ENCODE measurements at regions of chr7 and their contacts with region 1.

Region 1: GRCh38 chr7:116525913-116526861 is 1.4 kb downstream of the CAV1 start:
- DNase-seq: peak; percentile 14 to 89
- H3K4me3 ChIP-seq: peak overlapping the region; percentile 75 to 98
- H3K27ac ChIP-seq: peak overlapping the region; percentile 97 to 99
- H3K4me1 ChIP-seq: peaks cover 0 to 18% of the 10 kb centered on the region in 2 donors
- H3K27me3 ChIP-seq: no peaks in the 10 kb centered on the region
- CTCF ChIP-seq: peak; percentile 49 to 97 (median 62)

Region 2: DNA sequence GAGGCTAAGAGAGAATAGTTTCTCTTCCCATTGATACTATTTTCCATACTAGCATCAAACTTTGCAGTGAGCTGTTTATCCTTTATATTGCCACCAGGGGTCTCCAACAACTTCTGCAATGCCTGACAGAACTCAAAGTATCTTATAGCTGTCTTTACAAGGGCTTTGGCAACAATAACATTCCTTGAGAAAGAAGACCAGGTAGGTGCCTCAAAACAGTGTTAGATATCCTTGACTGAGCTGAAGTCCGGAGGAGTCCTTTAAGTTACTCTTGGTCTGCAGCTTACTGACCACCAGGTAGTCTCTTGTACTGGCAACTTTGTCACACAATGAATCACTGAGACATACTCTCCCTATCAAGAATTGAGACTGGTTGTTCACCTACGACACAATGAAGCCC is 345.9 kb before region 1 on chr7:
- intact Hi-C with region 1: loop called (anchors 5 kb)
- DNase-seq: no peak
- H3K4me3 ChIP-seq: no peak overlapping the region
- H3K27ac ChIP-seq: no peak overlapping the region
- H3K4me1 ChIP-seq: peaks cover 0 to 4% of the 10 kb centered on the region in 2 donors
- H3K27me3 ChIP-seq: no peaks in the 10 kb centered on the region
- CTCF ChIP-seq: peak; percentile 64 to 78 (median 77)

Region 3: DNA sequence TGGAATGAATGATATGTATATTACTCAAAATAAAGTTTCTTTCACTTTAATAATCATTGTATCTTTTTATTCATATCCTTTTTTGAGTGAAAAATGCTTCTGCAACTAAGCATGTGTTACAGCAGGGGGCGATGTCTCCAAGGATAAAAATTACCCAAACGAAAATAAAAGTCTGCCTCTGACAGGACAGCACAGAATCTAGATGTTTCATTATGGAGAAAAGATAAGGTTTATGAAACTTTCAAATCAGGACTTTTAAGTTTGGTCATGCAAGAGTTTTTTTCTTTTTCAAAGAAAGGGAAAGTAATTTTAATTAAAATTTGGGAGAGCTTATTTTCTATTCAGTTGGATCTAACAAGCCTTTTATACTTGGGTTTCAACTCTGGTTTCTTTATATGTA is 267.5 kb before region 1 on chr7:
- intact Hi-C with region 1: loop called (anchors 1 kb)
- DNase-seq: no peak
- H3K4me3 ChIP-seq: no peak overlapping the region
- H3K27ac ChIP-seq: peak overlapping the region; percentile 0 to 46
- H3K4me1 ChIP-seq: peaks cover 0 to 6% of the 10 kb centered on the region in 2 donors
- H3K27me3 ChIP-seq: no peaks in the 10 kb centered on the region
- CTCF ChIP-seq: peak; percentile 64 to 77 (median 75)

Region 4: DNA sequence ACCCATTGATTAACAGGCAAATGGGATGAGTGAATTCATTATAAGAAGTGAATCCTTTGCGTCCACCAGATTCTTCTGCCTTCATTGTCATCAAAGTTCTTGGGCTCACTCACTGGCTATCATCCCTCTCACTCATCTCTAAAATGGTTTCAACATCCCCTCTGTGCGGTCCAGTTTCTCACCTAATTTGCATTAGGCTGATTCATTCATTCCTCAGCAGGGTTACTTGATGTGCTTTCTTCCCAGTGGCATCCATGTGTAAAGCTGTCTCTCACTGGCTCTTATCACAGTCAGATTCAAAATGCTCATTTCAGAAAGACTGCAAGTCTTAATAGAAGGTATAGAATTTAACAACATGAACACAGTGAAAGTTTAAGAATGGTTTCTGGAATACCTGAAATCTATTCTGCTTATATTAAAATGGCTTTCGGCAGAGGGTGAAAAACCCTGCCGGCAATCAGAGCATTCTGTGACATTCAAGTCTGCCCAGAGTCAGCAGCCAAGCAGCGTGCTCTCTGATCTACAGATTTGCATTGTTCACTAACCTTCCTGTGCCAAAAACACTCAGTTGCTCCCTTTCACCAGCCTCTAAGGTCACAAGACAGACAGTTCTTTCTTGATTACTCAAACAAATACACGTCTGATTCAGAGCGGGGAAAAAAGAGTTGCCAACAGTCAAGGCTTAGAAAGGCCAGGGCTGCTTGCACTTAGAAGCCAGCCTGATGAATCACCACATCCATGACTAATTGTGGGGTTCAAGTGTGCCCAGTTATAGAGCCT is 209.2 kb before region 1 on chr7:
- intact Hi-C with region 1: loop called (anchors 5 kb)
- DNase-seq: peak; percentile 48 to 90
- H3K4me3 ChIP-seq: peak overlapping the region in 1 of 2 donors; percentile 6
- H3K27ac ChIP-seq: peak overlapping the region; percentile 57 to 66
- H3K4me1 ChIP-seq: peaks cover 5 to 22% of the 10 kb centered on the region in 2 donors
- H3K27me3 ChIP-seq: no peaks in the 10 kb centered on the region
- CTCF ChIP-seq: no peak

Region 5: GRCh38 chr7:116499168-116500077 is 26.8 kb before region 1 on chr7 and contains the start of gene CAV2:
- intact Hi-C with region 1: loop called (anchors 1 kb)
- DNase-seq: peak; percentile 13 to 86
- H3K4me3 ChIP-seq: peak within 1 kb of the TSS; percentile 77 to 87
- H3K27ac ChIP-seq: peak within 1 kb of the TSS; percentile 97 to 100
- H3K4me1 ChIP-seq: peaks cover 0 to 13% of the 10 kb centered on the region in 2 donors
- H3K27me3 ChIP-seq: no peaks in the 10 kb centered on the region
- CTCF ChIP-seq: no peak
- total RNA-seq, gene CAV2: 92.6 TPM

Region 6: GRCh38 chr7:116582806-116583444 is 56.7 kb after region 1 on chr7:
- intact Hi-C with region 1: loop called (anchors 2 kb)
- DNase-seq: peak in 1 of 2 donors; percentile 86
- H3K4me3 ChIP-seq: peak overlapping the region in 1 of 2 donors; percentile 23
- H3K27ac ChIP-seq: peak overlapping the region; percentile 69 to 80
- H3K4me1 ChIP-seq: peaks cover 9 to 22% of the 10 kb centered on the region in 2 donors
- H3K27me3 ChIP-seq: no peaks in the 10 kb centered on the region
- CTCF ChIP-seq: no peak

Measured in ascending aorta (tissue), 2 donors.